ENCODE measurements at regions of chr19 and their contacts with region 1.

Region 1: DNA sequence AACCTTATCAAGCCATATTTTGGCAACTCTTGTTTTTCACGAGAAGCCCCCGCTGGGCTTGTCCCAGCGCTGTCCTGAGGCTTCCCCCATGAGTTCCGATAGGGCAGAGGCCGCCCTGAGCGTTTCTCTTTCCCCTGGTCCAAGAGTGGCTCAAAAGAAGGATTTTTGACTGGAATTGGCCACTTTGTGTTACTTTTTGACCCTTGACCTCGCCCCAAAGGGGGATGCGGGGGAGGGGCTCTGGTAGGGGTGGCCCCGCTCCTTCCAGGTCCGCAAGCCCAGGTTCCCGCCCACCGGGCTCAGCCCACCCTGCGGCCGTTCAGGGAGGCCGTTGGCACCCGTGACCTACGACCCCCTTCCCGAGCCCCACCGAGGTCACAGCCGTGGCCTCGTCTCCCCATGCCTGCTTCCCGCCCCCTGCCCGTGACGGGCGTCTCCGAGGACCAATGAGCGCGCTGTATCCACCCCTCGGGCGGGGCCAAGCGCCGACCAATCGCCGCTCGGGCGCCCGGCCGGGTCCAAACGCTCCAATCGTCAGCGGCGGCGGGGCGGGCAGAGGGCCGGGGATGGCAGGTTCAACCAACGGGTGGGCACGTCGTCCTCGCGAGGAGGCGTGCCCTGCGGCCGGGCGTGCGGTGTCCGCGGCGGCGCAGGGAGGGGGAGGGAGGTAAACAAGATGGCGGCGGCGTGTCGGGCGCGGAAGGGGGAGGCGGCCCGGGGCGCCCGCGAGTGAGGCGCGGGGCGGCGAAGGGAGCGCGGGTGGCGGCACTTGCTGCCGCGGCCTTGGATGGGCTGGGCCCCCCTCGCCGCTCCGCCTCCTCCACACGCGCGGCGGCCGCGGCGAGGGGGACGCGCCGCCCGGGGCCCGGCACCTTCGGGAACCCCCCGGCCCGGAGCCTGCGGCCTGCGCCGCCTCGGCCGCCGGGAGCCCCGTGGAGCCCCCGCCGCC is at the start of gene STK11:
- DNase-seq: peak; percentile 99
- H3K4me3 ChIP-seq: peak within 1 kb of the TSS; percentile 65 to 85
- H3K27ac ChIP-seq: peak within 1 kb of the TSS; percentile 47 to 49; a peak in 3 of 4 replicates
- H3K4me1 ChIP-seq: peaks cover 8 to 30% of the 10 kb centered on the region in 2 experiments; a peak in 1 of 4 replicates
- H3K27me3 ChIP-seq: no peaks in the 10 kb centered on the region
- CTCF ChIP-seq: no peak
- EP300 ChIP-seq: no peak
- RAD21 ChIP-seq: no peak
- polyA plus RNA-seq, gene STK11: 53.5 and 55.5 TPM in 2 replicates

Region 2: GRCh38 chr19:1151917-1152617 is 53.3 kb before region 1 on chr19:
- CTCF ChIA-PET with region 1: no interaction called
- POLR2A ChIA-PET with region 1: no interaction called
- DNase-seq: no peak
- H3K4me3 ChIP-seq: no peak overlapping the region
- H3K27ac ChIP-seq: no peak overlapping the region
- H3K4me1 ChIP-seq: peaks cover 0 to 17% of the 10 kb centered on the region in 2 experiments; a peak in 1 of 4 replicates
- H3K27me3 ChIP-seq: no peaks in the 10 kb centered on the region
- CTCF ChIP-seq: no peak
- EP300 ChIP-seq: no peak
- RAD21 ChIP-seq: no peak

Region 3: DNA sequence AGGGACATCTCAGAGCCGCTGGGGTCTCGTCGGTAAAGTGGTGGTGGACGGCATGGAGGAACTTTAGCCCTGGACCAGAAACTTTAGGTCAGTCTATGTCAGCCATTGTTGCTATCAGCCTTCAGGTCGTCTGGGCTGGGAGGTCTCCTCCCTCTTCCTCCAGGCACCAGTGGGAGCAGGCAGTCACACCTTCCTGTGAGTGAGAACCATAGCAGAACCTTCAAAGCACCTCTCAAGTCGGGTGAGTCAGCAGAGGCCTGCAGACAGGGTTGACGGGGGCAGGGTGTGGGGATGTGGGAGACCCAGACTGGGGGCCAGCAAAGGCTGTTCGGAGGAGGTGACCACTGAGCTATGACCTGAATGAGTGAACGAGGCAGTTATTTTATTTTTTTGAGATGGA is 16.0 kb before region 1 on chr19:
- CTCF ChIA-PET with region 1: interaction called, 16 read pairs
- POLR2A ChIA-PET with region 1: no interaction called
- DNase-seq: no peak
- H3K4me3 ChIP-seq: no peak overlapping the region
- H3K27ac ChIP-seq: no peak overlapping the region
- H3K4me1 ChIP-seq: no peaks in the 10 kb centered on the region
- H3K27me3 ChIP-seq: no peaks in the 10 kb centered on the region
- CTCF ChIP-seq: no peak
- EP300 ChIP-seq: no peak
- RAD21 ChIP-seq: no peak

Region 4: GRCh38 chr19:1223018-1223855 is 17.8 kb after region 1 on chr19:
- CTCF ChIA-PET with region 1: interaction called, 32 read pairs
- POLR2A ChIA-PET with region 1: no interaction called
- DNase-seq: peak; percentile 76
- H3K4me3 ChIP-seq: no peak overlapping the region; a peak in 1 of 4 replicates
- H3K27ac ChIP-seq: no peak overlapping the region; a peak in 1 of 4 replicates
- H3K4me1 ChIP-seq: peaks cover 0 to 5% of the 10 kb centered on the region in 2 experiments; a peak in 1 of 4 replicates
- H3K27me3 ChIP-seq: no peaks in the 10 kb centered on the region
- CTCF ChIP-seq: peak; percentile 61
- EP300 ChIP-seq: no peak
- RAD21 ChIP-seq: peak; percentile 39; the same call in 1 of the 2 replicates

Measured in SK-N-SH (cell line).